GM12878 (cell line): ENCODE measurements at regions of chr1 and their contacts with region 1.

Region 1: GRCh38 chr1:81760477-81761097 is 40.1 kb upstream of the ADGRL2 start:
- DNase-seq: no peak
- ATAC-seq: 0 out of 3 replicates have a peak, but pooled peaks have one; percentile 35
- H3K4me3 ChIP-seq: no peak overlapping the region
- H3K27ac ChIP-seq: no peak overlapping the region
- H3K4me1 ChIP-seq: no peaks in the 10 kb centered on the region
- H3K27me3 ChIP-seq: no peaks in the 10 kb centered on the region
- CTCF ChIP-seq: peak; percentile 18 to 48 (median 23); a peak in 4 of 6 replicates
- EP300 ChIP-seq: no peak
- POLR2A ChIP-seq: no peak
- RAD21 ChIP-seq: peak; percentile 41

Region 2: GRCh38 chr1:81470275-81470674 is 290.3 kb before region 1 on chr1:
- CTCF ChIA-PET with region 1: interaction called, 7 read pairs
- POLR2A ChIA-PET with region 1: no interaction called
- RAD21 ChIA-PET with region 1: interaction called, 3 read pairs
- SMC1A ChIA-PET with region 1: interaction called, 11 read pairs
- in situ Hi-C with region 1: no loop called
- intact Hi-C with region 1: no loop called
- DNase-seq: no peak
- ATAC-seq: no peak
- H3K4me3 ChIP-seq: no peak overlapping the region
- H3K27ac ChIP-seq: no peak overlapping the region
- H3K4me1 ChIP-seq: no peaks in the 10 kb centered on the region
- H3K27me3 ChIP-seq: peaks cover 0 to 3% of the 10 kb centered on the region in 2 experiments; a peak in 3 of 4 replicates
- CTCF ChIP-seq: no peak
- EP300 ChIP-seq: no peak
- POLR2A ChIP-seq: no peak
- RAD21 ChIP-seq: no peak

Region 3: GRCh38 chr1:81582467-81582986 is 178.1 kb before region 1 on chr1:
- CTCF ChIA-PET with region 1: interaction called, 10 read pairs
- POLR2A ChIA-PET with region 1: no interaction called
- RAD21 ChIA-PET with region 1: interaction called, 4 read pairs
- SMC1A ChIA-PET with region 1: interaction called, 6 read pairs
- in situ Hi-C with region 1: no loop called
- intact Hi-C with region 1: no loop called
- DNase-seq: peak; percentile 21
- ATAC-seq: peak; percentile 88
- H3K4me3 ChIP-seq: no peak overlapping the region
- H3K27ac ChIP-seq: no peak overlapping the region
- H3K4me1 ChIP-seq: no peaks in the 10 kb centered on the region
- H3K27me3 ChIP-seq: peaks cover 0 to 3% of the 10 kb centered on the region in 2 experiments; a peak in 2 of 4 replicates
- CTCF ChIP-seq: no peak
- EP300 ChIP-seq: peak in 1 of 2 experiments; percentile 66; a peak in 3 of 4 replicates
- POLR2A ChIP-seq: no peak
- RAD21 ChIP-seq: no peak

Region 4: DNA sequence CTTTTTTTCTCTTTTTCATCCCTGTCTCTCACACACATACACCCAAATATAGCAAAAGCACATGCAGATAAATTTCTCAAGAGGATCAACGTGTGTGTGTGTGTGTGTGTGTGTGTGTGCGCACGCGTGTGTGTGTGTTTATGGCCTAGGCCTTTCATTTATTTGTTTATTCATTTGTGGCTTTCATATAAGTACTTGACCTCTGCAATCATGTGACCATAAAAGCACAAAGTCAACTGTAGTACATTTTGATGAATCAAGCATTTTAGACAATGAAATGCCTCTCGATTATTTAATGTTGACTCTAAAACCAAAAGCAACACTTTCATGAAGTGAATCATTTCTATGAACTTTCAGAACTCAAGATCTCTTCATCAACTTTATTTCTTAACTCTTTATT is 153.9 kb before region 1 on chr1:
- CTCF ChIA-PET with region 1: interaction called, 12 read pairs
- POLR2A ChIA-PET with region 1: no interaction called
- RAD21 ChIA-PET with region 1: interaction called, 5 read pairs
- SMC1A ChIA-PET with region 1: interaction called, 26 read pairs
- in situ Hi-C with region 1: no loop called
- intact Hi-C with region 1: no loop called
- DNase-seq: no peak
- ATAC-seq: no peak
- H3K4me3 ChIP-seq: no peak overlapping the region
- H3K27ac ChIP-seq: no peak overlapping the region
- H3K4me1 ChIP-seq: no peaks in the 10 kb centered on the region
- H3K27me3 ChIP-seq: no peaks in the 10 kb centered on the region
- CTCF ChIP-seq: no peak
- EP300 ChIP-seq: no peak
- POLR2A ChIP-seq: no peak
- RAD21 ChIP-seq: no peak

Region 5: GRCh38 chr1:81834921-81835698 is 74.5 kb after region 1 on chr1:
- CTCF ChIA-PET with region 1: no interaction called
- POLR2A ChIA-PET with region 1: no interaction called
- RAD21 ChIA-PET with region 1: no interaction called
- SMC1A ChIA-PET with region 1: no interaction called
- in situ Hi-C with region 1: no loop called
- intact Hi-C with region 1: no loop called
- DNase-seq: no peak
- ATAC-seq: peak; percentile 63
- H3K4me3 ChIP-seq: no peak overlapping the region
- H3K27ac ChIP-seq: no peak overlapping the region
- H3K4me1 ChIP-seq: no peaks in the 10 kb centered on the region
- H3K27me3 ChIP-seq: no peaks in the 10 kb centered on the region
- CTCF ChIP-seq: no peak
- EP300 ChIP-seq: no peak
- POLR2A ChIP-seq: no peak
- RAD21 ChIP-seq: no peak